ENCODE measurements at regions of chr14 and their contacts with region 1.

Region 1: DNA sequence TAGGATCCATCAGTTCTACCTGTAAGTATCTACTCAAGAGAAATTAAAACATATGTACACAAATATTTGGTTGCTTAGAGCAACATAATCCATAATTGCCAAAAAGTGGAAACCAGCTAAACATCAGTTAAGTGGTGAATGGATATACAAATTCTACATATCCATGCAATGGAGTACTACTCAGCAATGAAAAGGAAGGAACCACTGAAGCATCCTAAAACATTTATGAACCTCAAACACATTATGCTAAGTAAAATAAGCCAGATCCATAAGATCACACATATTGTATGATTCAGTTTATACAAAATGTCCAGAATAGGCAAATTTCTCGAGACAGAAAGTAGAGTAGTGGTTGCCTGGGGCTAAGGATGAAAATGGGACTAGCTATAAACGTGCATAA is 8.4 kb upstream of the ARHGAP5 start:
- DNase-seq: no peak
- ATAC-seq: no peak
- H3K4me3 ChIP-seq: no peak overlapping the region
- H3K27ac ChIP-seq: no peak overlapping the region
- H3K4me1 ChIP-seq: no peaks in the 10 kb centered on the region
- H3K27me3 ChIP-seq: no peaks in the 10 kb centered on the region

Region 2: DNA sequence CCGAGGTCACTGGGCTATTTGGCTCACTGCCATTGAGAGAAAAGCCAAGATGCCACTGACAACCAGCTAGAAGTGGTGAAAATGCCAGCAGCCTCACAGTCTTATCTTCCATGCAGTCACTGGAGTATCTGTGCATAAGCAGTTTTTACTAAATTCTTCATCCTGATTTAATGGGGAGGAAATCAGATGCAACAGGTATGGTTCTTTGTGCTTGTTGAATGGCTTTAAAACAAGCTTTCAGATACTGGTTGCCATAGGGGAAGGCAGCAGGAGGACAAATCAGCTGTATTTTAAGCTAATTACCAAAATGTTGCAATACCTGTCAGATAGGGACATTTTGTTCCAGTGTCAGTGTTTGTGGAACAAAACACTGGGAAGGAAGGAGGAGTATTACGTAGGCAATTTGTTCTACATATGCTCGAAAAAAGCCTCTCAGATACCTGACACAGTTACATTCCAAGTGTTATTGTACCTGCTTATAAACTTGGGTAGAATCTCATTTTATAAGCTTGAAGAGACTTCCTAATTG is 45.7 kb before region 1 on chr14:
- intact Hi-C with region 1: loop called in 1 of 4 experiments (anchors 2 kb)
- DNase-seq: no peak
- ATAC-seq: peak in 1 of 2 donors; percentile 38
- H3K4me3 ChIP-seq: no peak overlapping the region
- H3K27ac ChIP-seq: no peak overlapping the region
- H3K4me1 ChIP-seq: peaks cover 4% of the 10 kb centered on the region
- H3K27me3 ChIP-seq: no peaks in the 10 kb centered on the region